CD14-positive monocyte (primary cell): ENCODE measurements at regions of chr7 and their contacts with region 1.

Region 1: GRCh38 chr7:36207451-36208291 is 54.6 kb downstream of the EEPD1 start:
- DNase-seq: peak; percentile 77 to 87 (median 84)
- H3K4me3 ChIP-seq: peak overlapping the region in 1 of 3 experiments; percentile 4
- H3K4me3 Mint-ChIP-seq: peak overlapping the region; percentile 16 to 51
- H3K27ac ChIP-seq: peak overlapping the region; percentile 71 to 82
- H3K27ac Mint-ChIP-seq: peak overlapping the region; percentile 86 to 93 (median 91)
- H3K4me1 ChIP-seq: peaks cover 36 to 39% of the 10 kb centered on the region in 2 donors
- H3K4me1 Mint-ChIP-seq: peaks cover 47% of the 10 kb centered on the region
- H3K27me3 ChIP-seq: no peaks in the 10 kb centered on the region
- H3K27me3 Mint-ChIP-seq: peaks cover 0 to 4% (median 3%) of the 10 kb centered on the region in 3 donors
- CTCF ChIP-seq: peak; percentile 23

Region 2: GRCh38 chr7:36264123-36264801 is 56.6 kb after region 1 on chr7:
- intact Hi-C with region 1: loop called (anchors 5 kb)
- DNase-seq: peak; percentile 88 to 96 (median 92)
- H3K4me3 ChIP-seq: peak overlapping the region in 1 of 3 experiments; percentile 52
- H3K4me3 Mint-ChIP-seq: peak overlapping the region; percentile 50 to 73
- H3K27ac ChIP-seq: peak overlapping the region; percentile 90 to 93
- H3K27ac Mint-ChIP-seq: peak overlapping the region; percentile 98 to 100 (median 99)
- H3K4me1 ChIP-seq: peaks cover 67 to 75% of the 10 kb centered on the region in 2 donors
- H3K4me1 Mint-ChIP-seq: peaks cover 78% of the 10 kb centered on the region
- H3K27me3 ChIP-seq: no peaks in the 10 kb centered on the region
- H3K27me3 Mint-ChIP-seq: peaks cover 1 to 3% (median 2%) of the 10 kb centered on the region in 3 donors
- CTCF ChIP-seq: no peak

Region 3: GRCh38 chr7:36280840-36281812 is 73.5 kb after region 1 on chr7:
- intact Hi-C with region 1: loop called in 1 of 2 experiments (anchors 5 kb)
- DNase-seq: peak; percentile 90 to 95 (median 91)
- H3K4me3 ChIP-seq: no peak overlapping the region
- H3K4me3 Mint-ChIP-seq: peak overlapping the region in 1 of 2 donors; percentile 71
- H3K27ac ChIP-seq: peak overlapping the region; percentile 36 to 90
- H3K27ac Mint-ChIP-seq: peak overlapping the region; percentile 83 to 98 (median 90)
- H3K4me1 ChIP-seq: peaks cover 57 to 67% of the 10 kb centered on the region in 2 donors
- H3K4me1 Mint-ChIP-seq: peaks cover 62% of the 10 kb centered on the region
- H3K27me3 ChIP-seq: no peaks in the 10 kb centered on the region
- H3K27me3 Mint-ChIP-seq: peaks cover 0 to 5% (median 2%) of the 10 kb centered on the region in 3 donors
- CTCF ChIP-seq: no peak

Region 4: DNA sequence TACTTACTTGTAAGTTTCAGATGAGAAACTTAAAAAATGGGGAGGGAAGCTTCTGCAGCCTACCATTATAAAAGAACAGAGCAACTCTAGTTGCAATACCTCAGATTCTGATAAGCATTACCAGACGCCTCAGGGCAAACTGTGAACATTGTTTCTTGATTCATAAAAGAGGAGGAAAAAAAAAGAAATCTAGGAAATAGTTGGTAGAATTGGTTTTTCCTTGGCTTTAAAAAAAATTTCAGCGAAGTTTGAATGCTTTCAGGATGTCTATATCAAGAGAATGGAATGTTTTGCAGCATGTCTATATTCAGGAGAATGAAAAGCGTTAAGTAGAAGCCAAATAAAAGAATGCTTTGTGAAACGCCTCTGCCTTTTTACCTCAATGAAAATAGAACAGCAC is 164.5 kb after region 1 on chr7:
- intact Hi-C with region 1: no loop called
- DNase-seq: no peak
- H3K4me3 ChIP-seq: no peak overlapping the region
- H3K4me3 Mint-ChIP-seq: no peak overlapping the region
- H3K27ac ChIP-seq: no peak overlapping the region
- H3K27ac Mint-ChIP-seq: no peak overlapping the region
- H3K4me1 ChIP-seq: peaks cover 4 to 5% of the 10 kb centered on the region in 2 donors
- H3K4me1 Mint-ChIP-seq: peaks cover 9% of the 10 kb centered on the region
- H3K27me3 ChIP-seq: no peaks in the 10 kb centered on the region
- H3K27me3 Mint-ChIP-seq: peaks cover 0 to 3% (median 0%) of the 10 kb centered on the region in 3 donors
- CTCF ChIP-seq: no peak

Region 5: DNA sequence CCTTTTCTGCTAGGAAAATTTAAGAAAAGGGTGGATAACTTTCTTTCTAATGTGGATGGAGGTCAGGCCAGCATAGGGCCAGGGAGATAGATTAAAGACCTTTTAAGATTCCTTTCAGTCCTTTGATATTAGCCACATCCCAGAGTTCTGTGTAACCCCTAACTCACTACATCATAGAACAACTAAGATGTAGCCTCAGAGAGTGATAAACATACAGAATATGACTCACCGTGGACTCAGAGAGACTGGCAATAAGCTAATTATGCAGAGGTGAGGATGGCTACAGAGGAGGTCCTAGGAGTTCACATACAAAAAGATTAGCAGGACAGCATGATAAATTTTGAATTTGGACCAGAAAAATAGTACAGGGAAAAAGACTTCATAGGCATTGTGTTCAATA is 375.6 kb after region 1 on chr7:
- intact Hi-C with region 1: no loop called
- DNase-seq: no peak
- H3K4me3 ChIP-seq: no peak overlapping the region
- H3K4me3 Mint-ChIP-seq: no peak overlapping the region
- H3K27ac ChIP-seq: peak overlapping the region in 1 of 2 donors; percentile 27
- H3K27ac Mint-ChIP-seq: peak overlapping the region in 3 of 7 donors; percentile 30 to 78 (median 72)
- H3K4me1 ChIP-seq: no peaks in the 10 kb centered on the region
- H3K4me1 Mint-ChIP-seq: no peaks in the 10 kb centered on the region
- H3K27me3 ChIP-seq: no peaks in the 10 kb centered on the region
- H3K27me3 Mint-ChIP-seq: no peaks in the 10 kb centered on the region
- CTCF ChIP-seq: no peak